GM18951 (cell line): ENCODE measurements at regions of chr17 and their contacts with region 1.

Region 1: GRCh38 chr17:66240630-66241029 is 11.4 kb upstream of the APOH start:
- POLR2A ChIP-seq: no peak

Region 2: GRCh38 chr17:66177048-66177447 is 63.6 kb before region 1 on chr17:
- in situ Hi-C with region 1: no loop called
- POLR2A ChIP-seq: no peak

Region 3: GRCh38 chr17:66906321-66907278 is 666.0 kb after region 1 on chr17:
- in situ Hi-C with region 1: loop called (anchors 25 kb)
- POLR2A ChIP-seq: no peak